CD8-positive, alpha-beta T cell (primary cell): ENCODE measurements at regions of chr3 and their contacts with region 1.

Region 1: GRCh38 chr3:101809178-101810021 is 30.4 kb downstream of the NXPE3 start:
- DNase-seq: peak in 6 of 9 experiments; percentile 14 to 77 (median 39)
- ATAC-seq: peak; percentile 78
- H3K4me3 ChIP-seq: no peak overlapping the region
- H3K4me3 Mint-ChIP-seq: peak overlapping the region; percentile 2
- H3K27ac ChIP-seq: peak overlapping the region in 1 of 2 experiments; percentile 17
- H3K27ac Mint-ChIP-seq: peak overlapping the region; percentile 79
- H3K4me1 ChIP-seq: peaks cover 14% of the 10 kb centered on the region
- H3K4me1 Mint-ChIP-seq: peaks cover 36% of the 10 kb centered on the region
- H3K27me3 ChIP-seq: no peaks in the 10 kb centered on the region
- H3K27me3 Mint-ChIP-seq: no peaks in the 10 kb centered on the region
- CTCF ChIP-seq: peak; percentile 73

Region 2: GRCh38 chr3:101362408-101362807 is 447.0 kb before region 1 on chr3:
- CTCF ChIA-PET with region 1: no interaction called
- POLR2A ChIA-PET with region 1: no interaction called
- intact Hi-C with region 1: no loop called
- DNase-seq: no peak
- ATAC-seq: no peak
- H3K4me3 ChIP-seq: no peak overlapping the region
- H3K4me3 Mint-ChIP-seq: no peak overlapping the region
- H3K27ac ChIP-seq: no peak overlapping the region
- H3K27ac Mint-ChIP-seq: no peak overlapping the region
- H3K4me1 ChIP-seq: no peaks in the 10 kb centered on the region
- H3K4me1 Mint-ChIP-seq: peaks cover under 1% of the 10 kb centered on the region
- H3K27me3 ChIP-seq: no peaks in the 10 kb centered on the region
- H3K27me3 Mint-ChIP-seq: no peaks in the 10 kb centered on the region
- CTCF ChIP-seq: no peak

Region 3: GRCh38 chr3:101819758-101820157 is 10.4 kb after region 1 on chr3:
- CTCF ChIA-PET with region 1: interaction called, 11 read pairs
- POLR2A ChIA-PET with region 1: interaction called, 5 read pairs
- intact Hi-C with region 1: no loop called
- DNase-seq: peak in 1 of 9 experiments; percentile 19
- ATAC-seq: no peak
- H3K4me3 ChIP-seq: no peak overlapping the region
- H3K4me3 Mint-ChIP-seq: no peak overlapping the region
- H3K27ac ChIP-seq: no peak overlapping the region
- H3K27ac Mint-ChIP-seq: no peak overlapping the region
- H3K4me1 ChIP-seq: no peaks in the 10 kb centered on the region
- H3K4me1 Mint-ChIP-seq: peaks cover 25% of the 10 kb centered on the region
- H3K27me3 ChIP-seq: no peaks in the 10 kb centered on the region
- H3K27me3 Mint-ChIP-seq: no peaks in the 10 kb centered on the region
- CTCF ChIP-seq: no peak

Region 4: DNA sequence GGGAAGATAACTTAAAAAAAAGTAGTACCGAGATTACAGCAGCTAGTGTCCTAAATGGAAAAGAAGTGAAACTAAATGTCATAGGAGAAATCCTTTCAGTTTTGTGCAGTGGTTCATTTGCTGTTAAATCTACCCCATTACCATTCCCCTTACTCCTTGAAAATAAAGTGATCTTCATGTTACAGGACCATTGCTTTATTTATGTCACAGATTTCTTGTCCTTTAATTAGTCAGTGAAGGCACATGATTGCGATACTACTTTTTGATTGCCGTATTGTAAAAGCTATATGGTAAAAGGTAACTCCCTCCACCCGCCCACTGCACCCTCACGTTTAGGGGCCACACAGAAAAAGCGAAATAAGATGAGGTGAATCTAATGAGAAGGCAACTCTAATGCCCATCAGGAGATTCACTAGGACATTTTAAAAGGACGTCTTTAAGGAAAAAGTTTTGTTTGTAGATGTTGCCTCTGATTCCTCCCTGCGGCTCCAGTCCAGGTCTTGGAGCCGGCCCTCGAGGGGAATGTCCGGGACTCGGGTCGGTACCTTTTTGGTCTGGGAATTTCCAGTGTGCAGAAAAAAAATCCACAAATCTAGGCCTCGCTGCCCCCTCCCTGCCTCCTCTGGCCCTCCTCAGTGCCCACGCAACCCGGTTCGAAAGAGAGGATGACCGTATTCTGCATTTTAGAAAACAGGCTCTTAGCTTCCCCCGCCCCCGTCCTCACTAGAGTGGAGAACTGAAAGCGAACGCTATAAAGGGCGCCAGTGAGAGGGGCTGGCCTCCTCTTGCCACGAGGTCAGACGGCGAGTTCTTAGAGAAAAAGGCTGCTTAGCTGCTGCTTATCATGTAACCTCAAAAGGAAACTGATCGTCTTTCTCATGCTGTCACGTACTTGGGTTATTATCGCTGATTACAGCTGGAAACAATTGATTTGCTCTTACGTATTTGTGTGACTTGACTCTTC is 18.1 kb after region 1 on chr3:
- CTCF ChIA-PET with region 1: interaction called, 11 read pairs
- POLR2A ChIA-PET with region 1: interaction called, 5 read pairs
- intact Hi-C with region 1: loop called in 1 of 2 experiments (anchors 2 kb)
- DNase-seq: peak; percentile 54 to 92 (median 79)
- ATAC-seq: peak; percentile 84
- H3K4me3 ChIP-seq: peak overlapping the region; percentile 61 to 65
- H3K4me3 Mint-ChIP-seq: peak overlapping the region; percentile 94
- H3K27ac ChIP-seq: peak overlapping the region; percentile 72 to 90
- H3K27ac Mint-ChIP-seq: peak overlapping the region; percentile 98
- H3K4me1 ChIP-seq: peaks cover 35% of the 10 kb centered on the region
- H3K4me1 Mint-ChIP-seq: peaks cover 61% of the 10 kb centered on the region
- H3K27me3 ChIP-seq: no peaks in the 10 kb centered on the region
- H3K27me3 Mint-ChIP-seq: no peaks in the 10 kb centered on the region
- CTCF ChIP-seq: no peak

Region 5: DNA sequence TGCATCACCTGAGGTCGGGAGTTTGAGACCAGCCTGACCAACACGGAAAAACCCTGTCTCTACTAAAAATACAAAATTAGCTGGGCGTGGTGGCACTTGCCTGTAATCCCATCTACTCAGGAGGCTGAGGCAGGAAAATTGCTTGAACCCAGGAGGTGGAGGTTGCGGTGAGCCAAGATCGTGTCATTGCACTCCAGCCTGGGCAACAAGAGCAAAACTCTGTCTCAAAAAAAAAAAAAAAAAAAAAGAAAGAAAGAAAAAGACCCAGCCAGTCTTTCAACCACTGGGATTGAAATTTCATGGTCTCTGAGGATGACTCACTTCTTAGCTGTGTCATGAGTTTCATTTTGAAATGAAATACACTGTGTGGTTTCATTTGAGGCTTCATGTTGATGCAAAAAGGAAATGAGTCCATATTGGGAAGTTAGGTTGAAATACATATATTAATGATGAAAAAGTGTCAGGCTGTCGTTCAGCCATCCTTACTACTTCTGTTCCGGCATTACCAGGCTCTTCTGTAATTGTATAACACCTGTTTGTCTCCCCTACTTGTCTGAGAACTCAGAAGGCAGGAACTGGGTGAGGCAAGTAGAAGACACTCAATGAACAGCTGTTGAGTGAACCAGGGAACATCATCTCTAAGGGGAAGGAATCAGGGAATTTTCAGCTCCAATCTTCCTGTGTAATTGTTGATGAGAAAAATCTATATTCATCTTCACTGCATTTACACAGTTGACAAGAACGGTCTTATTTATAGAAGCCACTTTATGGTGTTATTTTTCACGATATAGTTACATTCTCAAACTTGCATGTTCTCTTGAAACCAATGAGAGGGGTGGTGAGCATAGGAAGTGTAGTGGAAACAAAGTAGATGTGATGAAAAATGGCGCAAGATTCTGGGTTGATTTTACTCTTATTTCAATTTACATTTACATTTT is 127.3 kb after region 1 on chr3:
- CTCF ChIA-PET with region 1: interaction called, 3 read pairs
- POLR2A ChIA-PET with region 1: no interaction called
- intact Hi-C with region 1: loop called in 1 of 2 experiments (anchors 5 kb)
- DNase-seq: peak in 5 of 9 experiments; percentile 8 to 82 (median 31)
- ATAC-seq: peak; percentile 93
- H3K4me3 ChIP-seq: peak overlapping the region in 1 of 2 experiments; percentile 9
- H3K4me3 Mint-ChIP-seq: peak overlapping the region; percentile 45
- H3K27ac ChIP-seq: no peak overlapping the region
- H3K27ac Mint-ChIP-seq: peak overlapping the region; percentile 87
- H3K4me1 ChIP-seq: peaks cover 66% of the 10 kb centered on the region
- H3K4me1 Mint-ChIP-seq: peaks cover 22% of the 10 kb centered on the region
- H3K27me3 ChIP-seq: no peaks in the 10 kb centered on the region
- H3K27me3 Mint-ChIP-seq: no peaks in the 10 kb centered on the region
- CTCF ChIP-seq: no peak

Region 6: GRCh38 chr3:102536456-102536855 is 727.1 kb after region 1 on chr3:
- CTCF ChIA-PET with region 1: interaction called, 10 read pairs
- POLR2A ChIA-PET with region 1: no interaction called
- intact Hi-C with region 1: loop called (anchors 1 to 2 kb)
- DNase-seq: peak in 2 of 9 experiments; percentile 24 to 43
- ATAC-seq: no peak
- H3K4me3 ChIP-seq: no peak overlapping the region
- H3K4me3 Mint-ChIP-seq: no peak overlapping the region
- H3K27ac ChIP-seq: no peak overlapping the region
- H3K27ac Mint-ChIP-seq: no peak overlapping the region
- H3K4me1 ChIP-seq: no peaks in the 10 kb centered on the region
- H3K4me1 Mint-ChIP-seq: peaks cover 5% of the 10 kb centered on the region
- H3K27me3 ChIP-seq: no peaks in the 10 kb centered on the region
- H3K27me3 Mint-ChIP-seq: peaks cover 9% of the 10 kb centered on the region
- CTCF ChIP-seq: peak; percentile 9